Activated B cell treated with CpG ODN at 0.5 μM for 24 hours (primary cell): ENCODE measurements at regions of chr2 and their contacts with region 1.

Region 1: GRCh38 chr2:190977505-190977904 is 36.5 kb downstream of the STAT1 start:
- DNase-seq: no peak
- ATAC-seq: no peak
- H3K4me3 Mint-ChIP-seq: no peak overlapping the region
- H3K27ac Mint-ChIP-seq: no peak overlapping the region
- H3K4me1 Mint-ChIP-seq: peaks cover 20% of the 10 kb centered on the region
- H3K27me3 Mint-ChIP-seq: no peaks in the 10 kb centered on the region
- CTCF ChIP-seq: no peak

Region 2: DNA sequence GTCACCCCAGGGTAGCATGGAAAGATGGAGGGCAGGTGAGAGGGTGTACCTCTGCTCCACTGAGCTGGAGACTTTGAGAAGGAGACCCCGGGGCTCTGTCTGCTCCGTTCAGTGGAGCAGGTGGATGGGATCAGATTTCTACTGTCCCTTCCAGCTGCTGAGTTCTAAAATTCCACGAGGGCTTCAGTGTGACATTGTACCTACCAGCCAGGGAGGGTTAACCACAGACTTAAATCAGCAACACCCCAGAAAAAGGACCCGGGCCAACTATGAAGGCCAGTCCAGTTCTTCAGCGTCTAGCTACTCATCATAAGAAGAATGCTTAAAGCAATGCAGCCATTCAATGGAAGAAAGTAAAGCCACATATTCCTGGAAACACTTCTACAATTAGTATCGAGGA is 12.6 kb after region 1 on chr2:
- CTCF ChIA-PET with region 1: no interaction called
- POLR2A ChIA-PET with region 1: no interaction called
- intact Hi-C with region 1: loop called (anchors 2 kb)
- DNase-seq: no peak
- ATAC-seq: no peak
- H3K4me3 Mint-ChIP-seq: no peak overlapping the region
- H3K27ac Mint-ChIP-seq: peak overlapping the region; percentile 30
- H3K4me1 Mint-ChIP-seq: peaks cover 3% of the 10 kb centered on the region
- H3K27me3 Mint-ChIP-seq: no peaks in the 10 kb centered on the region
- CTCF ChIP-seq: no peak

Region 3: GRCh38 chr2:191165176-191165643 is 187.7 kb after region 1 on chr2:
- CTCF ChIA-PET with region 1: no interaction called
- POLR2A ChIA-PET with region 1: no interaction called
- intact Hi-C with region 1: no loop called
- DNase-seq: no peak
- ATAC-seq: no peak
- H3K4me3 Mint-ChIP-seq: no peak overlapping the region
- H3K27ac Mint-ChIP-seq: no peak overlapping the region
- H3K4me1 Mint-ChIP-seq: peaks cover 2% of the 10 kb centered on the region
- H3K27me3 Mint-ChIP-seq: peaks cover 10% of the 10 kb centered on the region
- CTCF ChIP-seq: no peak